Activated CD4-positive, alpha-beta memory T cell treated with anti-CD3 and anti-CD28 coated beads, Interleukin-2, amount 10 ng/mL, durations not matched to agents 7 days and 5 days (primary cell): ENCODE measurements at regions of chr18 and their contacts with region 1.

Region 1: GRCh38 chr18:63844254-63844653 is 43.3 kb upstream of the SERPINB2 start:
- DNase-seq: no peak
- H3K4me3 Mint-ChIP-seq: no peak overlapping the region
- H3K27ac Mint-ChIP-seq: no peak overlapping the region
- H3K4me1 Mint-ChIP-seq: no peaks in the 10 kb centered on the region
- H3K27me3 Mint-ChIP-seq: peaks cover 32% of the 10 kb centered on the region

Region 2: DNA sequence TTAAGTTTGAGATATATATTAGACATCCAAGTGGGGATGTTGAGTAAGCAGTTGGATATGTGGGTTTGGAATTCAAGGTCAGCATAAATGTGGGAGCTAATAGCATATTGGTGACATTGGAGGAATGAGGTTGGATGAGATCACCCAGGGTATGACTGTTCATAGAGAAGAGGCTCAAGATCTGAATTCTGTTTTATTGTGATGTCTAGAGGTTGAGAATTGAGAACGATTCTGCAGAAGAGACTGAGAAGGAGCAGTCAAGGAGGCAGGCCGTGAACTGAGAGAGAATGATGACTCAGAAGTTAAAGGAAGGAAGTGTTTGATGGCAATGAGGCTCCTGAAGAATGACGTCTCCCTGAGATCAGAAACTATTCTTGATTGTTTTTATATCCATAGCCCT is 135.6 kb before region 1 on chr18:
- CTCF ChIA-PET with region 1: no interaction called
- POLR2A ChIA-PET with region 1: no interaction called
- DNase-seq: no peak
- H3K4me3 Mint-ChIP-seq: no peak overlapping the region
- H3K27ac Mint-ChIP-seq: no peak overlapping the region
- H3K4me1 Mint-ChIP-seq: no peaks in the 10 kb centered on the region
- H3K27me3 Mint-ChIP-seq: no peaks in the 10 kb centered on the region

Region 3: DNA sequence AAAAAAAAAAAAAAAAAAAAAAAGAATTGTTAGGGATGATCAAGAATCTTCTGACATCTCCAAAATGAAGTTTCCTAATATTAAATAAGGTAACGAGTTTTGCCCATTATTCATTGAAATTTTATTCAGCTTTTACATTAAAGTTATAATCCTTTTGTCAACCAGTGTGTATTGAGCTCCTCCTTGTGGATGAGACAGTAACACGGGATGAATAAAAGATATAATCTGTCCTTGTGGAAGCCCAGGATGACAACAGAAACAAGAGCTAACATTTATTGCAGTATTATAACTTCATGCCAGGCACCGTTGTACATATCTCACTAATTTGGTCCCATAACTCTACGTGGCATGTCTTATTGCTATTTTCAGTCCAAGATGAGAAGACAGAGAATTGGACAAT is 102.5 kb before region 1 on chr18:
- CTCF ChIA-PET with region 1: no interaction called
- POLR2A ChIA-PET with region 1: no interaction called
- DNase-seq: no peak
- H3K4me3 Mint-ChIP-seq: no peak overlapping the region
- H3K27ac Mint-ChIP-seq: no peak overlapping the region
- H3K4me1 Mint-ChIP-seq: no peaks in the 10 kb centered on the region
- H3K27me3 Mint-ChIP-seq: no peaks in the 10 kb centered on the region

Region 4: GRCh38 chr18:63823518-63824219 is 20.6 kb before region 1 on chr18:
- CTCF ChIA-PET with region 1: interaction called, 11 read pairs
- POLR2A ChIA-PET with region 1: no interaction called
- DNase-seq: peak; percentile 46
- H3K4me3 Mint-ChIP-seq: no peak overlapping the region
- H3K27ac Mint-ChIP-seq: no peak overlapping the region
- H3K4me1 Mint-ChIP-seq: no peaks in the 10 kb centered on the region
- H3K27me3 Mint-ChIP-seq: peaks cover 29% of the 10 kb centered on the region